PC-3 (cell line): ENCODE measurements at regions of chr17 and their contacts with region 1.

Region 1: DNA sequence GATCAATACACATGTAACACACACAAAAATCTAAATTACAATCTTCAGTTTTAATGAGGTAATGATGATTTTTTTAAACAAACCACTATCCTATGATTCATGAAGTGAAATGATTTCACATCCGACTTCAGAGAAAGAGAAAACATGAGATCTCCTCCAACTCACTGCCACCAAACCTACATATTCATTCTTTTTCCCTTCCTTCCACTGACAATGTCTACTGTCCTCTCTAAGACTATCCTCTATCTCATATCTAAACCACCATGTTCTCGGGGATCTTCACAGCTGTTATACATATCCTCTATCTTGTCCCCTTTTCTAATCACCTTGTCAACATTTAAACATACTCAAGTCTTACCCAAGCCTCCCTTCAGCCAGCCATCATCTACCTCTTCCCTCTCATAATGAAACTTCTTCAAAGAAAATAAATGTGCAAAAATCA is 53.5 kb downstream of the SMURF2 start:
- DNase-seq: peak; percentile 53
- ATAC-seq: peak; percentile 93
- H3K4me3 ChIP-seq: no peak overlapping the region
- H3K27ac ChIP-seq: peak overlapping the region; percentile 44
- H3K4me1 ChIP-seq: peaks cover 10% of the 10 kb centered on the region
- H3K27me3 ChIP-seq: no peaks in the 10 kb centered on the region
- CTCF ChIP-seq: no peak

Region 2: DNA sequence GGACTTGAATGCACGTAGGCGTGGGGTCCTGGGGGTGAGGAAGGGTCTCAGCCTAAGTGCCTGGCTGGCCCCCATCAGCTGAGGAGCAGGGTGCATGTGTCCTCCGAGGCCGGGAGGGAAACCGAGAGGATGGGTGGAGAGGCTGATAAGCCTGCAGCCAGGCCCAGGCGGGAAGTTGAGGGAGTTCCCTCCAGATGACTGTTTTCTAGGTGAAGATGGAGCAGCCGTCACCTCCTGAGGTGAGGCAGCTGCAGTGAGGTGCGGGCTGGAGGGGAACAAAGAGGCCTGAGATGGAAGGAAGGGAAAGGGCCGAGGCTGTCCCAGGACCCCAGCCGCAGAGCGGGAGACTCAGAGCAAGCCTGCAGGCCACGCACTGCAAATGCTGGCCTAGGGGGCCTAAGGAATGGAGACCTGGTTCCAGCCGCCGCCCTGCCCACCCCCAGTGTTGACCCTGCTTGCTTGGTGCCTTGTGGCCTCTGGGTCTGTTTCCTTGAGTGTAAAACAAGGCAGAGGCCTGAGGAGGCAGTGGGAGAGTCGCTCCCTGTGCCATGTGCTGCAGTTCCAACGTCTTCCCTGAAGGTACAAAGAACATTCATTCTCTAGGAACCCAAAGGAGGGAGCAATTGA is 220.9 kb before region 1 on chr17:
- CTCF ChIA-PET with region 1: no interaction called
- POLR2A ChIA-PET with region 1: no interaction called
- intact Hi-C with region 1: no loop called
- DNase-seq: no peak
- ATAC-seq: no peak
- H3K4me3 ChIP-seq: peak overlapping the region; percentile 68
- H3K27ac ChIP-seq: peak overlapping the region; percentile 94
- H3K4me1 ChIP-seq: peaks cover 66% of the 10 kb centered on the region
- H3K27me3 ChIP-seq: no peaks in the 10 kb centered on the region
- CTCF ChIP-seq: no peak

Region 3: DNA sequence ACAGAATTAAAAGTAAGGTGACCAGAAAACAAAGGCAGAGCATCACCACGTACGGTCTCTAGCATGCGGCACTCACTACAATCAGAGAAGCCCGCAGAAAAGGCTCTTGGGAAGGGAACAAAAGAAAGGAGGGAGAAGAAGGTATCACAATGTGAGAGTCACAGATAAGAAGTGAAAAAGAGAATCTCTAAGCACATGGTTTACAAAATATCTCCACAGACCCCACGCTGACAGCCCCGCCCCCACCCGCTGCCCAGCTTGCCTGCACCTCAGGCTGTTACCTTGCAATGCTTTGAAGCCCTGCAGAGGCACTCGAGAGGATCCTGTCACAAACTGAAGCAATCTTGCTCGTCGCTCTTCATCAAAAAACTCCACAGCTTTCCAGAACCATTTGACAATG is 61.2 kb before region 1 on chr17:
- CTCF ChIA-PET with region 1: no interaction called
- POLR2A ChIA-PET with region 1: no interaction called
- intact Hi-C with region 1: loop called (anchors 10 kb)
- DNase-seq: no peak
- ATAC-seq: no peak
- H3K4me3 ChIP-seq: no peak overlapping the region
- H3K27ac ChIP-seq: no peak overlapping the region
- H3K4me1 ChIP-seq: no peaks in the 10 kb centered on the region
- H3K27me3 ChIP-seq: no peaks in the 10 kb centered on the region
- CTCF ChIP-seq: no peak

Region 4: GRCh38 chr17:64622931-64623654 is 14.5 kb after region 1 on chr17:
- CTCF ChIA-PET with region 1: no interaction called
- POLR2A ChIA-PET with region 1: no interaction called
- intact Hi-C with region 1: loop called (anchors 2 kb)
- DNase-seq: peak; percentile 96
- ATAC-seq: peak; percentile 97
- H3K4me3 ChIP-seq: peak overlapping the region; percentile 27; the same call in 1 of the 2 replicates
- H3K27ac ChIP-seq: peak overlapping the region; percentile 44
- H3K4me1 ChIP-seq: peaks cover 18% of the 10 kb centered on the region
- H3K27me3 ChIP-seq: no peaks in the 10 kb centered on the region
- CTCF ChIP-seq: no peak